B cell (primary cell): ENCODE measurements at regions of chr3 and their contacts with region 1.

Region 1: GRCh38 chr3:141402476-141403171 is 34.3 kb downstream of the ZBTB38 start:
- DNase-seq: no peak
- ATAC-seq: peak; percentile 61
- H3K4me3 ChIP-seq: peak overlapping the region; percentile 37 to 83 (median 78)
- H3K4me3 Mint-ChIP-seq: peak overlapping the region; percentile 95
- H3K27ac ChIP-seq: peak overlapping the region; percentile 35 to 90
- H3K27ac Mint-ChIP-seq: peak overlapping the region; percentile 98
- H3K4me1 ChIP-seq: peaks cover 8 to 14% of the 10 kb centered on the region in 2 donors
- H3K4me1 Mint-ChIP-seq: peaks cover 48% of the 10 kb centered on the region
- H3K27me3 ChIP-seq: no peaks in the 10 kb centered on the region
- H3K27me3 Mint-ChIP-seq: no peaks in the 10 kb centered on the region
- CTCF ChIP-seq: no peak

Region 2: DNA sequence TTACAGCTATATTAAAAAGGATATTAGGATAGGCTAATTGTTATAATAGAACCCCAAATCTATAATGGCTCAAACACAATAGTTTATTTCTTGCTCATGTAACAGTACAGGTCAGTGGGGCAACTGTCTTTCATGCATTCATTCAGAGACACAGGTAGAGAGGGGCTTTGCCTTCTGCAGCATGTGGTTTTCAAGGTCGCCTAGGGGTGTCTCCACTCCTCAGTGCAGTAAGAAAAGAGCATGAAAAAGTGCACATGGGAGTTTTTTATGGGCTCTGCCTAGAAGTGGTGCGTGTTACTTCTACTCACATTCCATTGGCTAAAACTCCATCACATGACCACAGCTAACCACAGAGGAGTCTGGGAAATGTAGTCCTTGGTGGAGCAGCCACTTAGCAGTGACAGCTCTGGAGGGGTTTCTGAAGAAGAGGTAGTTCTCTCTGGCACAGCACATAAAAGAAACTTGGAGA is 32.5 kb before region 1 on chr3:
- CTCF ChIA-PET with region 1: interaction called, 5 read pairs
- POLR2A ChIA-PET with region 1: interaction called, 5 read pairs
- intact Hi-C with region 1: loop called (anchors 2 kb)
- DNase-seq: peak; percentile 91
- ATAC-seq: peak; percentile 98
- H3K4me3 ChIP-seq: no peak overlapping the region
- H3K4me3 Mint-ChIP-seq: peak overlapping the region; percentile 5
- H3K27ac ChIP-seq: peak overlapping the region in 1 of 2 donors; percentile 42
- H3K27ac Mint-ChIP-seq: peak overlapping the region; percentile 62
- H3K4me1 ChIP-seq: peaks cover 4 to 8% of the 10 kb centered on the region in 2 donors
- H3K4me1 Mint-ChIP-seq: peaks cover 20% of the 10 kb centered on the region
- H3K27me3 ChIP-seq: no peaks in the 10 kb centered on the region
- H3K27me3 Mint-ChIP-seq: no peaks in the 10 kb centered on the region
- CTCF ChIP-seq: peak; percentile 69

Region 3: DNA sequence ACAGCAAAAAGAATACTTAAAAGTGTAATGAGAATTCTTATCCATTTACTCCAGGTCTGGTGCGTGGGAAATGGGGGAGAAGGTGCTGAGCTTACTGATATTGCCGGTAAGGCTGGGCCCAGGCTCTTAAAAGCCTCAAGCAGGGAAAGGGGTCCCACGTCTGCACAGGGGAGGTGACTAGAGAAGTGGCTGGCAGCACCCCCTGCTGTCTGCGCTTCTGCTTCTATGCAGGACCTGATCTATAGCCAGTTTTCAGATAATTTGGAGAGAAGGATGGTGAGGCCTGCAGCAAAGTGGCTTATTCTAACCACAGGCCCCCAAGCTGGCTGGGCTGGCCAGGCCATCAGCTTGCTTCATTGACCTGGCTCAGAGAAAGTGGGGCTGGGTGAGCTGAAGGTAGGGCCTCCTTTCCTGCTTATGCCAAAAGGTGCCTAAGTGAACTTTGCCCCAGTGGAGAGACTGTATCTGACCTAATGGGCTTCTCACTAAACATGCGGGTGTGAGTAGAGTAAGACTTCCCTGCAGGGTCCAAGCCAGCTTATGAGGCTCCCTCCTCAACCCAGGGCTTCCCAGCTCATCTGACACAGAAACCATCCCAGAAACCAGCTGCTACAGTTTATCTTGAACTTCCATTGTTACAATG is 442.9 kb after region 1 on chr3:
- CTCF ChIA-PET with region 1: no interaction called
- POLR2A ChIA-PET with region 1: no interaction called
- intact Hi-C with region 1: no loop called
- DNase-seq: peak; percentile 5
- ATAC-seq: no peak
- H3K4me3 ChIP-seq: no peak overlapping the region
- H3K4me3 Mint-ChIP-seq: no peak overlapping the region
- H3K27ac ChIP-seq: no peak overlapping the region
- H3K27ac Mint-ChIP-seq: no peak overlapping the region
- H3K4me1 ChIP-seq: no peaks in the 10 kb centered on the region
- H3K4me1 Mint-ChIP-seq: no peaks in the 10 kb centered on the region
- H3K27me3 ChIP-seq: no peaks in the 10 kb centered on the region
- H3K27me3 Mint-ChIP-seq: peaks cover 11% of the 10 kb centered on the region
- CTCF ChIP-seq: no peak